Transverse colon (tissue), 4 donors: ENCODE measurements at regions of chr9 and their contacts with region 1.

Region 1: DNA sequence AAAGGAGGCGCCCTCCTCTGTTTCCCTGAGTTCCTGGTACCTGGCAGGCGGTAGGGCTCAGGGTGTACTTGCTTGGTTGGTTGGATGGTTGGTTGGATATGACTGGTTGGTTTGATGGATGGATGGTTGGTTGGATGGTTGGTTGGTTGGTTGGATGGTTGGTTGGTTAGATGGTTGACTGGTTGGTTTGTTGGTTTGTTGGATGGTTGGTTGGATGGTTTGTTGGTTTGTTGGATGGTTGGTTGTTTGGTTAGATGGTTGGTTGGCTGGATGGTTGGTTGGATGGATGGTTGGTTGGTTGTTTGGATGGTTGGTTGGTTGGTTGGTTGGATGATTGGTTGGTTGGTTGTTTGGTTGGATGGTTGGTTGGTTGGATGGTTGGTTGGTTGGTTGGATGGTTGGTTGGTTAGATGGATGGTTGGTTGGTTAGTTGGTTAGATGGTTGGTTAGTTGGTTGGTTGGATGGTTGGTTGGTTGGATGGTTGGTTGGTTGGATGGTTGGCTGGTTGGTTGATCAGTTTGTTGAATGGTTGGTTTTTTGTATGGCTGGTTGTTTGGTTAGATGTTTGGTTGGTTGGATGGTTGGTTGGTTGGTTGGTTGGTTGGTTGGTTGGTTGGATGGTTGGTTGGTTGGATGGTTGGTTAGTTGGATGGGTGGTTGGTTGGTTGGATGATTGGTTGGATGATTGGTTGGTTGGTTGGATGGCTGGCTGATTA is 6.5 kb upstream of the TMEM250 start:
- DNase-seq: no peak
- H3K4me3 ChIP-seq: no peak overlapping the region
- H3K27ac ChIP-seq: no peak overlapping the region
- H3K4me1 ChIP-seq: peaks cover 2 to 15% (median 5%) of the 10 kb centered on the region in 4 donors
- H3K27me3 ChIP-seq: peaks cover 33% of the 10 kb centered on the region
- CTCF ChIP-seq: no peak
- EP300 ChIP-seq: no peak
- POLR2A ChIP-seq: no peak

Region 2: DNA sequence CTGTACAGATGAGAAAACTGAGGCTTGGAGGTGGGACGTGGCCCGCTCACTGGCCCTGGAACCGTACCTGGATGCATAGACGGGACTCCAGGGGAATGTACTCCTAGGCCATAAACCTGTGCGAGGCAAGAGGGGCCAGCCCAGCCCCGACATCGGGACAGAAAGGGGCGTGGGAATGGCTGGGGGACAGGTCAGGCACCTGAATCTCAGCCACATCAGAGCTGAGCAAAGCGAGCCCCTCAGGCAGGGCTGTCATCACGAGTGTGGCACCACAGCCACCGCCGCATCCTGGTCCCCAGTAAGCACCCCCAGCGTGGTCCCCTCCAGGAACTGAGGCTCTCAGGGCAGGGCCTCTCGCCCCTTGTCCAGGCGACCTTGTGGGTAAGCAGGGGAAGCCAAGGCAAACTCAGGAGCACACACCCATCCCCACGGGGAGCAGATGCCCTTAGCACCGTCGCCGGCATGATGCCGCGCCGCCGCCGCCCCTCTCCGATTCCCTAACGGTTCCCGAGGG is 46.6 kb before region 1 on chr9:
- in situ Hi-C with region 1: no loop called
- intact Hi-C with region 1: loop called (anchors 1 kb)
- DNase-seq: no peak
- H3K4me3 ChIP-seq: no peak overlapping the region
- H3K27ac ChIP-seq: peak overlapping the region; percentile 53 to 64 (median 60)
- H3K4me1 ChIP-seq: peaks cover 13 to 44% (median 30%) of the 10 kb centered on the region in 4 donors
- H3K27me3 ChIP-seq: no peaks in the 10 kb centered on the region
- CTCF ChIP-seq: no peak
- EP300 ChIP-seq: no peak
- POLR2A ChIP-seq: no peak